PC-3 (cell line): ENCODE measurements at regions of chr1 and their contacts with region 1.

Region 1: DNA sequence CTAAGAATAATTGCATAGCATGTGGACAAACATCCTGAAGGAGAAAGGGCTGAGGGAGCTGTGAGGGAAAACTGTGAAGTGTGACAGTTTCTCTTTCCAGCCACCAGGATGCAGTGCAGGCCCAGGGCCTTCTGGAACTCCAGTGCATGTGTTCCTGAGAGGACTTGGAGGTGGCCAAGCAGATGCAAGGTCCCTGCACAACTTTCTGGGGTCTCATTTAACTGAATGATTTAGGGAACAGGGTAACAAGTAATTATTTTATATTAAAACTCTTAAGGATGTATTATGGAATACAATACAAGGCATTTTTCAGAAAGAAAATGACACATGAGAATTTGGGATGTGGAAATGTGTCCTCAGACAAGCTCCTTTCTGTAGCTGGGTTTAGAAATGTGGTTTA is 61.2 kb upstream of the MCOLN3 start:
- DNase-seq: peak; percentile 79
- ATAC-seq: peak; percentile 99
- H3K4me3 ChIP-seq: no peak overlapping the region
- H3K27ac ChIP-seq: no peak overlapping the region
- H3K4me1 ChIP-seq: no peaks in the 10 kb centered on the region
- H3K27me3 ChIP-seq: no peaks in the 10 kb centered on the region
- CTCF ChIP-seq: peak; percentile 86

Region 2: DNA sequence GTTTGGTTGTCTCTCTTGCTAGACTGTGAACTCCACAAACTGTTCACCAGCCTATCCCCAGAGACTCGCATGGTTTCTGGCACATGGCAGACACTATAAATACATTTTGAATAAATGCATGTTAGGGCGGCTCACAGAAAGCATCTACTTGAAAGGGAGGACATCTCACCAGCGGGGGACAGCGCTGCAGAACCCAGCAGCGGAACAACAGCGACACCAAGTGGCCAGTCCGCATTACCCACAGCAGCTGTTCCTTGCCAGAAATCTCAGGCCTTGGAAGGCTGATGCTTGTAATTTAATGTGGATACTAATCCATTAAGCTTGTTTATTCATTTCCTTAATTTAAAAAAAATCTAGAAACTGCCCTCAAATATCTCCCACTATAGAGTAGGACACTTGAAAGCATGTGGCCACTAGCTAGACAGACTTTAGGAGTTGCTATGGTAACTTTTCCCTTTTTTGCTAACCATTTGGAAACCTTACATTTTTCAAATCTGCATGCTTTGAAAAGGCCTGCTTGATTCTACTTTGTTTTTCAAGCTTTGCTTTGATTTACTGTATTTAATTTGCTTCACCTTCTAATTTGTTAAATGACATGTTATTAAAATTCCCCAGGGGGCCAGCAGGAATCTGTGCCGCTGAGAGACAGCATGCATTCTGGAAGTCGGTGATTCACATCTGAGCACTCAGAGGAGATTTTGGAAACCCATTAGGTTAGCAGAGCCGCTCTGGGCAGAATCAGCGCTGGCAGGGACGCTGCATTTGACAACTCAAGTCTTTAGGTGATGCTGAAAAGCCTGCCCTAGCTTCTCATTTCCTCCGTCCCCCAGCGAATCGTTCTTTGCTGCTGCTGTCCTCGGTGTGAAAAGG is 355.7 kb before region 1 on chr1:
- CTCF ChIA-PET with region 1: no interaction called
- POLR2A ChIA-PET with region 1: no interaction called
- intact Hi-C with region 1: no loop called
- DNase-seq: peak; percentile 82
- ATAC-seq: peak; percentile 89
- H3K4me3 ChIP-seq: no peak overlapping the region
- H3K27ac ChIP-seq: no peak overlapping the region
- H3K4me1 ChIP-seq: 0 out of 2 replicates have a peak, but pooled peaks cover 4% of the 10 kb centered on the region
- H3K27me3 ChIP-seq: no peaks in the 10 kb centered on the region
- CTCF ChIP-seq: peak; percentile 97

Region 3: DNA sequence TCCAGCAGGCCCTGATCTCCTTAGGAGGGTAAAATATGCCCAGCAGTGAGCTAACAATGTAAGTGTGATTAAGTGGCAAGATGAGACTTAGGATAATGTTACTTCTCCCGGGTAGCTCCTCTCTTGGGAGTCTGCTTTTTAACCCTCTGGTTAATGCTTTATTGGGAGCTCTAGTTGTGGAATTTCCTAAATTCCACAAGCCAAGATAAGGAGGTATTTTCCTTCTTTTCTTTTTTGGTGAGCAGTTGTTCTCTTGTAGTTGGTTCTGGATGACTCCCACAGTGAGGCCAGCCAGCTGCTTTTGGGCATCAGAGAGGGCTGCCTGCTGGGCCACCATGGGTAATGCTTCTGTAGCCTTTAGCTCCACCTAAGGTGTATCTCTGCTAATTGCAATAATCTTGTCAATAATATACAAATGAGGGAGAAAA is 130.7 kb after region 1 on chr1:
- CTCF ChIA-PET with region 1: interaction called, 7 read pairs
- POLR2A ChIA-PET with region 1: interaction called, 4 read pairs
- intact Hi-C with region 1: loop called (anchors 1 kb)
- DNase-seq: peak; percentile 51
- ATAC-seq: peak; percentile 82
- H3K4me3 ChIP-seq: no peak overlapping the region
- H3K27ac ChIP-seq: no peak overlapping the region
- H3K4me1 ChIP-seq: peaks cover 17% of the 10 kb centered on the region
- H3K27me3 ChIP-seq: no peaks in the 10 kb centered on the region
- CTCF ChIP-seq: peak; percentile 65